ENCODE measurements at regions of chr6 and their contacts with region 1.

Region 1: GRCh38 chr6:70107852-70108629 is 194.8 kb downstream of the COL9A1 start:
- DNase-seq: no peak
- H3K4me3 ChIP-seq: no peak overlapping the region
- CTCF ChIP-seq: peak; percentile 17

Region 2: DNA sequence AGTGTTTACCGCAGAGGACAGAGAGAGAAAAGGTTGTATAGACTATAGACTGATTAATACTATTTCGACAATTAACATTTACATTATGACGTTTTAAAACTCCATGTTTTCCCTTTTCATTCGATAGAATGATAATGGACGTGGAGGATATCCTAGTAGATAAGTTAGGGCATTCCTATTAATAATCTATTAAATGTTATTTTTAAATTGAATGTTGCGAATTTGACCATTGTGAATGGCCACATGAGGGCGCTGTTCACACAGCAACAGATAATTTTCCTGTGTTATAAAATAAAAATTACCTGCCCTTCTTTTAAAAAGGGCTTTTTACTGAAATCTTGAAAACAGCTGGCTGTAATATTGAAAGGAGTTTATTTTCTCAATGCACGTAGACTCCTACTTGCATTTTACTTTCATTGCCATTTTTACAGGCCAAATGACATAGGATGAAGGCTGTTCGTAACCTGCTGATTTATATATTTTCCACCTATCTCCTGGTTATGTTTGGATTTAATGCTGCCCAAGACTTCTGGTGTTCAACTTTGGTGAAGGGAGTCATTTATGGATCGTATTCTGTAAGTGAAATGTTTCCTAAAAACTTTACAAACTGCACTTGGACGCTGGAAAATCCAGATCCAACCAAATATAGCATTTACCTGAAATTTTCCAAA is 1469.7 kb before region 1 on chr6:
- CTCF ChIA-PET with region 1: interaction called, 13 read pairs
- POLR2A ChIA-PET with region 1: no interaction called
- DNase-seq: no peak
- H3K4me3 ChIP-seq: no peak overlapping the region
- CTCF ChIP-seq: peak; percentile 32

Region 3: GRCh38 chr6:69729870-69730449 is 378.1 kb before region 1 on chr6:
- CTCF ChIA-PET with region 1: interaction called, 20 read pairs
- POLR2A ChIA-PET with region 1: no interaction called
- DNase-seq: no peak
- H3K4me3 ChIP-seq: no peak overlapping the region
- CTCF ChIP-seq: no peak

Region 4: DNA sequence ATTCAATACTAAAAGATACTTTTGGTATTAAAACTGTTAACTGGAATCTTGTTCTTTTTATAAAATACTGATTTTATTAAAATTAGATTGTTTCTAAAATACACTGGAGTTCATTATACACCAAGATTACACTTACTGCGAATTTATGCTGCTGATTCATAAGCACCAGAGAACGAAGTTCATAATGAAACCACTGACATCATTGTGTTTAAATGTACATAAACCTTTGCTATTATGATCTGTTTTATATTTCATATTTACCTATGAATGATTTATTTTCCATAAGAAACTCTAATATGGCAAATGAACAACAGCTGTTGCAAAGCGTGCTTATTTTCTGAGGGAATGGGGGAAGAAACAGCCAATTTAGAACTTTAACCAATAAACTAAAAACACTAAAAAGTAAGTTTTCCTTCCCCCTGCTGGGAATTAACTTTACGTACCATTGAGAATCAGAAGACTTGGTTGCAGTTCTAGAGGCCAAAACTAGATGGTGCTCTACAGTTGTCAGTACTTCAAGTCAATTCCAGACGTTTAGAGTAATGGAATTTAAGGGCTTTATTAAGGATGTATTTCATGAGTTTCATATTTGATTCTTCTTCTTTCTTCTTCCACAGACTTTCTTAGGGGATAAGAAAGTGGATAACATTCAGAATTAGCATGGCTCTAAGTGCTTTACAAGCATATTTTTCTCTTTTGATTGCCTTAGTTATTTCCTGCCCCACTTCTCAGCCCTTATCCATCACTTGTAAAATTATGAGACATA is 272.4 kb before region 1 on chr6:
- CTCF ChIA-PET with region 1: interaction called, 16 read pairs
- POLR2A ChIA-PET with region 1: no interaction called
- DNase-seq: peak; percentile 45
- H3K4me3 ChIP-seq: no peak overlapping the region
- CTCF ChIP-seq: peak; percentile 68

Region 5: GRCh38 chr6:70079241-70079640 is 28.8 kb before region 1 on chr6:
- CTCF ChIA-PET with region 1: no interaction called
- POLR2A ChIA-PET with region 1: no interaction called
- DNase-seq: no peak
- H3K4me3 ChIP-seq: no peak overlapping the region
- CTCF ChIP-seq: no peak

Measured in AG04449 (cell line).